ENCODE measurements at regions of chr16 and their contacts with region 1.

Region 1: GRCh38 chr16:22297114-22297878 is at the start of gene POLR3E:
- DNase-seq: peak; percentile 93
- ATAC-seq: peak; percentile 86
- H3K4me3 ChIP-seq: peak within 1 kb of the TSS; percentile 83 to 92
- H3K27ac ChIP-seq: peak within 1 kb of the TSS; percentile 94
- H3K4me1 ChIP-seq: peaks cover 6 to 19% of the 10 kb centered on the region in 2 experiments; a peak in 3 of 4 replicates
- H3K27me3 ChIP-seq: no peaks in the 10 kb centered on the region
- CTCF ChIP-seq: peak; percentile 76 to 96 (median 92)
- POLR2A ChIP-seq: peak; percentile 53
- RAD21 ChIP-seq: peak; percentile 98
- total RNA-seq, gene POLR3E: 65.0 TPM

Region 2: DNA sequence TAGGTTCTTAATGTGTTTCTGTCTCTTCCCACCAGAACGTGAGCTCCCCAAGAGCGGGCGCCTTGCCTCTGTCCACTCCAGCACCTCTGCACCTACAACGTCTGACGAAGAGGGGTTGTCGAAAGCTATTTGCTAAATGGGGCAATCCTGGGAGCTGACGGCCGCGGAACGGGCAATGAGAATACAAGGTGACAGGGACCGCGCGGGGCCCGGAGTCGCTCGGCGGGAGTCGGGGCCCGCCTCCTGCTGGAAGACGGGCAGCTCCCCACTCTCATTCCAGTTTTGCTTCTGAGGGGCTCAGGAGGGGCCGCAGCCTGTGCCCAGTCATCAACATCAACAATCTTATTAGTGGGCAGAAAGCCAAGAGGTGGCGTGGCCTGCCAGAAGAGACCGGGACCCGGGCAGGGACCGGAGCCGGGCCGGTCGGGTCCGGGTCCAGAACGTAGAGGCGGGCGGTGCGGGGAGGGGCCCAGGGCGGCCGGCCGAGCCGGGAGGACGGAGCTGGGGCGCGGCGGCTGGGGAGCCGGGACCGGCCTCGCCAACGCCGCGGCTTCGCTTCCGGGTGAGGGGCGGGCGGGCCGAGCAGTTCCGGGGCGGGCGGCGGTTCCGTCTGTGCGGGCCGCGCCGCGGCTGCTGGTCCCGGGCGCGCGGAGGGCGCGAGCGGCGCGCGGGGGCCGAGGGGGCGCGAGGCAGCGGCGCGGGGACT is 289.6 kb before region 1 on chr16 and contains the start of gene MOSMO:
- CTCF ChIA-PET with region 1: no interaction called
- POLR2A ChIA-PET with region 1: no interaction called
- RAD21 ChIA-PET with region 1: no interaction called
- intact Hi-C with region 1: loop called (anchors 10 kb)
- DNase-seq: no peak
- ATAC-seq: peak; percentile 85
- H3K4me3 ChIP-seq: peak within 1 kb of the TSS; percentile 88 to 90
- H3K27ac ChIP-seq: peak within 1 kb of the TSS; percentile 85
- H3K4me1 ChIP-seq: peaks cover 17 to 42% of the 10 kb centered on the region in 2 experiments
- H3K27me3 ChIP-seq: no peaks in the 10 kb centered on the region
- CTCF ChIP-seq: no peak
- POLR2A ChIP-seq: no peak
- RAD21 ChIP-seq: no peak
- total RNA-seq, gene MOSMO: 27.6 TPM

Region 3: GRCh38 chr16:22195695-22196558 is 101.4 kb before region 1 on chr16:
- CTCF ChIA-PET with region 1: interaction called, 7 read pairs
- POLR2A ChIA-PET with region 1: interaction called, 3 read pairs
- RAD21 ChIA-PET with region 1: interaction called in 1 of 2 experiments, 5 read pairs
- intact Hi-C with region 1: loop called (anchors 1 kb)
- DNase-seq: peak; percentile 72
- ATAC-seq: peak; percentile 21
- H3K4me3 ChIP-seq: peak overlapping the region; percentile 43 to 59
- H3K27ac ChIP-seq: no peak overlapping the region
- H3K4me1 ChIP-seq: peaks cover 24 to 52% of the 10 kb centered on the region in 2 experiments
- H3K27me3 ChIP-seq: no peaks in the 10 kb centered on the region
- CTCF ChIP-seq: peak in 2 of 3 experiments; percentile 79 to 86; a peak in 4 of 6 replicates
- POLR2A ChIP-seq: no peak
- RAD21 ChIP-seq: no peak

Region 4: DNA sequence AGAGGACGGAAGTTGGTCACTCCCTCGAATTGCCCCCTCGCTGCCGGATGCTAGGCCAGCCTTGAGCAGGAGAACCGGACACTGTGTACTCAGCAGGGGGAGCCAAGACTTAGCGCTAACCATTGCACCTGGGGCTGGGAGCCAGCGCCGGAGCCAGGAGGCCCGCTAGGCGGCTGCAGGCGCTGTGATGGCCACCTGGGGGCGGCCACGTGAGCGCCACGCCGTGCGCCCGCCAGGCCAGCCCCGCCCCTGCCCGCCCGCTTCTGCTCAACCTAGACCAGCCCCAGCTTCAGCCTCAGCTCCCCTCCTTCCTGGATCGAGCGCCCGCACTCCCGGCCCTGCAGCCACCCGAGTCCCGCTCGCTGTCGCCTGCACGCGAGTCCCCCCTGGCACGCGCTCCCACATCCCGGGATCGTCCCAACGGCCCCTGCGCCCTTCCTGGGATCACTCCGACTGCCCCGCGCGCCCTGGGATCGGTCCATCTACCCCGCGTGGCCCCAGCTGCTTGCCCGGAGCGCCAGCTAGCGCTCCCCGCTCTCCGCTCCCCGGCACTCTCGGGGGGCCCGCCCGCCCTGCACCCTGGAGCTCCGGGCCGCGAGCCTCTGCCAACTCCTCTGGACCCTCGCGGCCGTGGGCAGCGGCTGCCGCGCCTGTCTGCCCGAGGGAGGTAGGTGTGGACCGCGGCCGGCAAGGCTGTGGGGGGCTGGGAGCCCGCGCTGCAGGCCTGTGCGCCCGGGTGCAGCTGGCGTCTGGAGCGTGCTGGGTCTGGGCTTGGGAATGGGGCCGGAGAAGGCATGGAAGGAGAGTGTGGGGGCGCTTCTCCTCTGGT is 91.1 kb before region 1 on chr16 and contains the start of gene EEF2K:
- CTCF ChIA-PET with region 1: interaction called, 8 read pairs
- POLR2A ChIA-PET with region 1: no interaction called
- RAD21 ChIA-PET with region 1: interaction called in 1 of 2 experiments, 3 read pairs
- intact Hi-C with region 1: loop called (anchors 1 kb)
- DNase-seq: peak; percentile 95
- ATAC-seq: peak; percentile 91
- H3K4me3 ChIP-seq: peak within 1 kb of the TSS; percentile 84 to 94
- H3K27ac ChIP-seq: peak within 1 kb of the TSS; percentile 85
- H3K4me1 ChIP-seq: peaks cover 16 to 25% of the 10 kb centered on the region in 2 experiments
- H3K27me3 ChIP-seq: no peaks in the 10 kb centered on the region
- CTCF ChIP-seq: peak; percentile 61 to 96 (median 62)
- POLR2A ChIP-seq: no peak
- RAD21 ChIP-seq: peak; percentile 80
- total RNA-seq, gene EEF2K: 31.0 TPM

Region 5: DNA sequence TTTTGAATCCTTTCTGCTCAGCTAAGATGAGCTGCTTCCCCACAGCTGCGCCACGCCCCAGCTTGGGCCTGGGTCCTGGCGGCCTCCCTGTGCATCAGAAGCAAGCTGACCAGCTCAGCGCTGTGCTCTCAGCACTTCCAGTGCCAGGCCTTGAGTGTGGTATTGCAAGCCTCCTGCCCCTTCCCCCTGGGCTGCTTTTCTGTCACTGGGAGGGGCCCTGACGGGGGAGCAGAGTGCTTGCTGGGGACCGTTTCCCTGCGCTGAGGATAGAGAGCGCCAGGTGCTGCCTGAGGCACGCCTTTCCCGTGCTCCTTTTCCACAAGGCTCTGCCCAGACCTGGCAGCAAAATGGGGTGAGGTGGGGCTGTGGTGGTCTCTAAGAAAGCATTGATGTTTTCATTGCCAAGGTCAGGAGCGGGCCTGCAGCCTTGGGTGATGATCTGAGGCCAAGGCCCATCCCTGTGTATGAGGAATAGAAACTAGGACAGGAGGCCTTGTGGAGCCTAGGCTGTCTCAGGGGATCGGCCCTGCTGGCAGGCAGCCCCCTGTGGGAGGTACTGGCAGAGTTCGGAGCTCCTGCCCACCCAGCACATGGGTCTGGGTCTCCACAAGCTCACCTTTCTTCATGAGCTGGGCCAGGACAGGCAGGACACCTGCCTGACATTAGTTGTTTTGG is 29.6 kb after region 1 on chr16:
- CTCF ChIA-PET with region 1: no interaction called
- POLR2A ChIA-PET with region 1: no interaction called
- RAD21 ChIA-PET with region 1: no interaction called
- intact Hi-C with region 1: no loop called
- DNase-seq: no peak
- ATAC-seq: no peak
- H3K4me3 ChIP-seq: no peak overlapping the region
- H3K27ac ChIP-seq: no peak overlapping the region
- H3K4me1 ChIP-seq: no peaks in the 10 kb centered on the region
- H3K27me3 ChIP-seq: no peaks in the 10 kb centered on the region
- CTCF ChIP-seq: no peak
- POLR2A ChIP-seq: no peak
- RAD21 ChIP-seq: no peak

Measured in HCT116 (cell line).